ENCODE measurements at regions of chr3 and their contacts with region 1.

Region 1: DNA sequence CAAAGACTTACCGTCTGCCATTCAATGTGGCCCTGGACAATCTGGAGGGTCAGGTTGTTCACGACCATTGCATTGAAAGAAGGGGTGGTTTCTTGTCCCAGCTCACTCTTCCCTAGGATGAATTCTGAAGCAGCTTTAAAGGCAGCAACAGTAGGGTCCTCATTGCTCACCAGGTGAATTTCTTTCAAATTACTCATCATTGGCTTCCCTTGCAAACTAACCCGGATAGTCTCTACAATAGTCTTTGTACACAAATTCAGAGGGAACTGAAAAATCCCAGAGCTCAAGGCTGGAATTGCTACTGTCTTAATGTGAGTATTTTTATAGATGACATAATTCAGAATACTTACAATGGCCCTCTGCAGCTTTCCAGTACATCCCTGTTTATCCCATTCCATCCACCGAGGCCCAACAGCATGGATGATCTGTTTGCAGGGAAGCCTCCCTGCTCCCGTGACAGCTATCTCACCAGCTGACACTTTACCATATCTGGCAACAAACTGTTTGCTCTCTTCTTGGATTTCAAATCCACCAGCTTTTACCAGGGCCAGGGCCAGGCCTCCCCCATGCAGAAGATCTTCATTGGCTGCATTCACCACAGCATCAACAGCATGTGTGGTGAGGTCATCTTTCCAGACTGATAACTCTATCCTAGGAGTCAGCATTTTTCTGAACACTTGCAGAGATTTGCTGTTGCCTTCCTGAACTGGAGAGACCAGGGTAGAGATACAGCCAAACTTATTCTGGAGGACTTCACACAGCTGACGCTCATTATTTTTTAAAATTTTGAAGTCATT is 8.6 kb downstream of the PARP9 start:
- H3K4me3 Mint-ChIP-seq: no peak overlapping the region
- H3K27ac Mint-ChIP-seq: no peak overlapping the region
- H3K4me1 Mint-ChIP-seq: peaks cover 13% of the 10 kb centered on the region
- H3K27me3 Mint-ChIP-seq: no peaks in the 10 kb centered on the region

Region 2: DNA sequence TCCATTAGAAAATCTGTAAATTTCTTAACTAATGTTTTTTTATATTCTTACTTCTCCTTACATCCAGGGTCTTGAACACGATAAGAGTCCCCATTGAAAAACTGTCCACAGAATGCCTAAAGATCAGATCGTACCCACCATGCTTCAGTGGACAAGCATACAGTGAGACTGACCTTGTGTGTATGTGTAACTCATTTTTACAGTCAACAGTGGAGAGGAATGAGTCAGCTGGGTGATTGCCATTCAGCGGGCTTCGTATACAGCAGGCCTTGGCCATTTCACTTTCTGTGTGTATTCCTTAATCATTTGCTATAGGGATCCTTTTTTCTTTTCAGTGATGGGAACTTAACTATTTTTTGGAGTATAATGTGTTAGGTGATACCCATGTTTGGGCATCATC is 135.7 kb after region 1 on chr3:
- intact Hi-C with region 1: no loop called
- H3K4me3 Mint-ChIP-seq: no peak overlapping the region
- H3K27ac Mint-ChIP-seq: no peak overlapping the region
- H3K4me1 Mint-ChIP-seq: peaks cover 4% of the 10 kb centered on the region
- H3K27me3 Mint-ChIP-seq: no peaks in the 10 kb centered on the region

Region 3: GRCh38 chr3:122873741-122874515 is 318.5 kb after region 1 on chr3:
- intact Hi-C with region 1: loop called (anchors 10 kb)
- H3K4me3 Mint-ChIP-seq: no peak overlapping the region
- H3K27ac Mint-ChIP-seq: no peak overlapping the region
- H3K4me1 Mint-ChIP-seq: no peaks in the 10 kb centered on the region
- H3K27me3 Mint-ChIP-seq: no peaks in the 10 kb centered on the region